Activated CD4-positive, alpha-beta memory T cell treated with anti-CD3 and anti-CD28 coated beads for 36 hours (primary cell): ENCODE measurements at regions of chr3 and their contacts with region 1.

Region 1: GRCh38 chr3:49839193-49839809 is 17.1 kb downstream of the TRAIP start:
- DNase-seq: peak; percentile 85
- H3K4me3 Mint-ChIP-seq: no peak overlapping the region
- H3K27ac Mint-ChIP-seq: no peak overlapping the region
- H3K4me1 Mint-ChIP-seq: peaks cover 1% of the 10 kb centered on the region
- H3K27me3 Mint-ChIP-seq: no peaks in the 10 kb centered on the region

Region 2: GRCh38 chr3:49406571-49407566 is 432.4 kb before region 1 on chr3:
- CTCF ChIA-PET with region 1: no interaction called
- POLR2A ChIA-PET with region 1: no interaction called
- intact Hi-C with region 1: no loop called
- DNase-seq: no peak
- H3K4me3 Mint-ChIP-seq: no peak overlapping the region
- H3K27ac Mint-ChIP-seq: peak overlapping the region; percentile 75
- H3K4me1 Mint-ChIP-seq: peaks cover 49% of the 10 kb centered on the region
- H3K27me3 Mint-ChIP-seq: no peaks in the 10 kb centered on the region

Region 3: DNA sequence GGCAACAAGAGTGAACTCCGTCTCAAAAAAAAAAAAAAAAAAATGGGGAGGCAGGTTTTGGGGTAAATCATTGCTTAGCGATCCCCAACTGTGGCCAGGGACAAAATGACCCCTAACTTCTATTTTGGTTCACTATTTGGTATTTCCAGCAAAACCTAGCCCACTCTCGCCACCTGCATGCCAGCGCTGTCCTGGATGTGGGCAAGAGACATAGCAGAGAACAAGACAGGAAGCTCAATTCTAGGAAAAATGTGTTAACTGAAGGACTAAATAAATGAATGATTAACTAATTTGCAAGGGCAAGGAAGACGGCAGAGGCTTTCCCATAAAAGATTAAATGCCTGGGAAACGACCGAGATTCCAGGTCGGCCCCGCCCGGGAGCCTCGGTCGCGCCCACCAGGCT is 410.6 kb before region 1 on chr3:
- CTCF ChIA-PET with region 1: no interaction called
- POLR2A ChIA-PET with region 1: no interaction called
- intact Hi-C with region 1: no loop called
- DNase-seq: no peak
- H3K4me3 Mint-ChIP-seq: peak overlapping the region; percentile 77
- H3K27ac Mint-ChIP-seq: peak overlapping the region; percentile 73
- H3K4me1 Mint-ChIP-seq: peaks cover 14% of the 10 kb centered on the region
- H3K27me3 Mint-ChIP-seq: no peaks in the 10 kb centered on the region

Region 4: DNA sequence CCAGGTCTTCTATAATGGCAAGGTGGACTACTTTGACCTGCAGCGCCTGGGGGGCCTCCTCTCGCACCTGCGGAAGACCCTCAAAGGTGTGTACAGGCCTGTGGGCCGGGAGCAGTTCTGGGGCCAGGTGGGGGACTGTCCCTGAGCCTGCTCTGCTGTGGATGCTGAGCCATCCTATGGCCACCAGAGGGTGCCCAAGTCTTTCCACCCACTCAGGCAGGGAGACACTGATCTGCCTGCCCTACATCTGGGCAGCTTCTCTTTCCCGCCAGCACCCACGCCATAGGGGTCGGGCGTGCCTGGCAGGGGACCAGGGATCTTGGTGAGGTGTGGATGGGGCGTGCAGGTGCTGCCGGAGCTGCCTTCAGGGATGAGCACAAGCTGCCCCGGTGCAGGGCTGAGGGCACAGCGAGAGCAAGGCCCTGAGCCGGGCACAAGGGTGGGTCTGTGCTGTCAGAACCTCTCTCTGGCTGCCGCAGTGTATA is 135.8 kb before region 1 on chr3:
- CTCF ChIA-PET with region 1: interaction called, 30 read pairs
- POLR2A ChIA-PET with region 1: no interaction called
- intact Hi-C with region 1: loop called (anchors 1 kb)
- DNase-seq: peak; percentile 79
- H3K4me3 Mint-ChIP-seq: no peak overlapping the region
- H3K27ac Mint-ChIP-seq: no peak overlapping the region
- H3K4me1 Mint-ChIP-seq: no peaks in the 10 kb centered on the region
- H3K27me3 Mint-ChIP-seq: no peaks in the 10 kb centered on the region

Region 5: GRCh38 chr3:49786241-49786958 is 52.9 kb before region 1 on chr3 and contains the start of gene IP6K1:
- CTCF ChIA-PET with region 1: interaction called, 17 read pairs
- POLR2A ChIA-PET with region 1: no interaction called
- intact Hi-C with region 1: loop called (anchors 5 kb)
- DNase-seq: peak; percentile 100
- H3K4me3 Mint-ChIP-seq: peak within 1 kb of the TSS; percentile 83
- H3K27ac Mint-ChIP-seq: peak within 1 kb of the TSS; percentile 89
- H3K4me1 Mint-ChIP-seq: peaks cover 21% of the 10 kb centered on the region
- H3K27me3 Mint-ChIP-seq: no peaks in the 10 kb centered on the region
- total RNA-seq, gene IP6K1: 28.8 to 29.3 TPM

Region 6: GRCh38 chr3:49813497-49814174 is 25.7 kb before region 1 on chr3 and contains the start of gene UBA7:
- CTCF ChIA-PET with region 1: interaction called, 159 read pairs
- POLR2A ChIA-PET with region 1: interaction called, 10 read pairs
- intact Hi-C with region 1: no loop called
- DNase-seq: peak; percentile 57
- H3K4me3 Mint-ChIP-seq: peak within 1 kb of the TSS; percentile 93
- H3K27ac Mint-ChIP-seq: peak within 1 kb of the TSS; percentile 90
- H3K4me1 Mint-ChIP-seq: peaks cover 26% of the 10 kb centered on the region
- H3K27me3 Mint-ChIP-seq: no peaks in the 10 kb centered on the region
- total RNA-seq, gene UBA7: 85.6 to 86.4 TPM

Region 7: DNA sequence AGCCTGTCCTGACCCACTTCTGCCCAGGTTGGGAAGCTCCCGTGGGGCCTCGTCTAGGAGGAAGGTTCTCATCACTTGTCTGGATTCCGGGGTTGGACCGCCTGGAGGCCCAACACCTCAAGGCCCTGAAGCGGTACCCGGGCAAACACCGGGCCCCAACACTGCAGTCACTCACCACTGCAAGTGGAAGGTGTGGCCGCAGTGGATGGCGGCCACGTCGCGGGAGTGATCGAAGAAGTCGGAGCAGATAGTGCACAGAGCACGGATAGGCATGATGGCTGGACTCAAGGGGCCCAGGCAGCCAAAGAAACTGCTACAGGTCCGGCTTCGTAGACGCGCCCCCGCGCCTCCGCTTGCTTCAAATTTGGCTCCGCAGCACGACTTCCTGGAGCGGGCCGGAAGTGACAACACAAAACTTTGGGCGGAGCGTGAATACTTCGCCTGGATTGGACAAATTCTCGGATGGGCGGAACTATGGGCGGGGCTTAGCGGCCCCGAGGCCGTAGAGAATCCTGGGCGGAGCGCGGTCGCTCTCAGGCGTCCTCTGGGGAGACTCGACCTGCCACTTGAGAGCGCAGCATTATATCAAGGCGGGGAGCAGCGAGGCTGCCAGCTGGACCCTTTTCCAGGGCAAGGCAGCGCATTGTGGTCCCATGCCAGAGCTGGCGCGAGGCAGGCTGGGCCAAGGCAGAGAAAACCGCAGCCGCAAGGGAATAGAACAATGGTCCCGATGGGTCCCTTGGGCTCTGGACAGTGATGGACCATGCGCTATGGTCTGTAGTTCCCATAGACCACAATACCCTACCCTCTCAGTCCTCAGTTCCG is 17.1 kb after region 1 on chr3 and contains the start of gene TRAIP:
- CTCF ChIA-PET with region 1: interaction called, 14 read pairs
- POLR2A ChIA-PET with region 1: no interaction called
- intact Hi-C with region 1: no loop called
- DNase-seq: peak; percentile 96
- H3K4me3 Mint-ChIP-seq: peak within 1 kb of the TSS; percentile 97
- H3K27ac Mint-ChIP-seq: peak within 1 kb of the TSS; percentile 72
- H3K4me1 Mint-ChIP-seq: peaks cover 13% of the 10 kb centered on the region
- H3K27me3 Mint-ChIP-seq: no peaks in the 10 kb centered on the region
- total RNA-seq, gene TRAIP: 22.7 to 25.3 TPM